ENCODE measurements at regions of chr16 and their contacts with region 1.

Region 1: GRCh38 chr16:88194397-88195268 is 188.1 kb upstream of the ZNF469 start:
- DNase-seq: no peak

Region 2: DNA sequence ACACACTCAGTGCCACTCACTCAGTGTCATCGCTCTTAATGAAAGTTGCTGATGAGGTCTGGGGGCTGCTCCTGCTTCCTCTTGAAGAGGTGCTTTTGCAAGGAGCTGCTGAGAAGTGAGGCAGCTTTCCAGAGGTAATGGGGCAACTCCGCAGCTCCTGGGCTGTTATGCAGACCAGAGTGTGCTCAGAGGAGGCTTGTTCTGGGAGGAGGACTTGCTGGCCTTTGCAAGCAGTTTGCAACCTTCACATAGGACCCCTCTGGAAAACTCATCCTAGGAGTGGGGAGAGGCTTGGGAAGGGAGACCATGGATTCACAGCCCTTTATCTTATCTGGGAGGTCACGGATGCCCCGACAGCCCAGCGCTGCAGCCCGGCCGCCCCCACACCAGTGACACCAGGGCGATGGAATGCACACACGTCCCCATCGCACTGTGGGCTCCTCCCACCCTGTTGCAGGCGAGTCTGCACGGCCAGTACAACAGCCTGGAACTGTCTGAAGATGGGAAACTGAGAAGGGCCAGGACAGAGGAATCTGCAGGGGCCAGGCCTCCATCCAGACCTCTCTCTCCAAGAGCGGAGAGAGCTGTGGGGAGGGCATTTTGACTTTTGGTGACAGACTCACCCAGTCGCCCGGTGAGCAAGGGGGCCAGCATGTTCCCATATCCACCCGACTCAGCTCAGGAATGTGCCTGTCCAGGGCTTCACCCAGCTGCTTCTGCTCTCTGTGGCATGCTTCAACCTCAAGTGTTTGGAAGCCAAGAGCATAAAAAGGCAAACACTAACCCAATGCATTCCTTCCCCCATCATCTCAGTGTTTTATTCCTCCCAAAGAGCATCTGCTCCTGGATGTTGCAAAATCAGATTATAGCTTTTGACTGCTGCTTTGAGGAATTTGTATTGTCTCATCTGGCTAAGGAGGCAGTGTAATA is 109.5 kb after region 1 on chr16:
- intact Hi-C with region 1: loop called (anchors 10 kb)
- DNase-seq: no peak

Region 3: DNA sequence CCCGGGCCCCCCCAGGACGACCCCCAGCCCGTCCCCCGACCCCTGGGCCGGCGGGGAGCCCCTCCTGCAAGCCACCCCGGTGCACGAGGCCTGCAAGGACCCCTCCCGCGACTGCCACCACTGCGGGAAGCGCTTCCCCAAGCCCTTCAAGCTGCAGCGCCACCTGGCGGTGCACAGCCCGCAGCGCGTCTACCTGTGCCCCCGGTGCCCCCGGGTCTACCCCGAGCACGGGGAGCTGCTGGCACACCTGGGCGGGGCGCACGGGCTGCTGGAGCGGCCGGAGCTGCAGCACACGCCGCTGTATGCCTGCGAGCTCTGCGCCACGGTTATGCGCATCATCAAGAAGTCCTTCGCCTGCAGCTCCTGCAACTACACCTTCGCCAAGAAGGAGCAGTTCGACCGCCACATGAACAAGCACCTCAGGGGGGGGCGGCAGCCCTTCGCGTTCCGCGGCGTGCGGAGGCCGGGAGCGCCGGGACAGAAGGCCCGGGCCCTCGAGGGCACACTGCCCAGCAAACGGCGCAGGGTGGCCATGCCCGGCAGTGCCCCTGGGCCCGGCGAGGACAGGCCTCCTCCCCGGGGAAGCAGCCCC is 242.8 kb after region 1 on chr16:
- intact Hi-C with region 1: loop called (anchors 2 kb)
- DNase-seq: no peak